ENCODE measurements at regions of chr14 and their contacts with region 1.

Region 1: DNA sequence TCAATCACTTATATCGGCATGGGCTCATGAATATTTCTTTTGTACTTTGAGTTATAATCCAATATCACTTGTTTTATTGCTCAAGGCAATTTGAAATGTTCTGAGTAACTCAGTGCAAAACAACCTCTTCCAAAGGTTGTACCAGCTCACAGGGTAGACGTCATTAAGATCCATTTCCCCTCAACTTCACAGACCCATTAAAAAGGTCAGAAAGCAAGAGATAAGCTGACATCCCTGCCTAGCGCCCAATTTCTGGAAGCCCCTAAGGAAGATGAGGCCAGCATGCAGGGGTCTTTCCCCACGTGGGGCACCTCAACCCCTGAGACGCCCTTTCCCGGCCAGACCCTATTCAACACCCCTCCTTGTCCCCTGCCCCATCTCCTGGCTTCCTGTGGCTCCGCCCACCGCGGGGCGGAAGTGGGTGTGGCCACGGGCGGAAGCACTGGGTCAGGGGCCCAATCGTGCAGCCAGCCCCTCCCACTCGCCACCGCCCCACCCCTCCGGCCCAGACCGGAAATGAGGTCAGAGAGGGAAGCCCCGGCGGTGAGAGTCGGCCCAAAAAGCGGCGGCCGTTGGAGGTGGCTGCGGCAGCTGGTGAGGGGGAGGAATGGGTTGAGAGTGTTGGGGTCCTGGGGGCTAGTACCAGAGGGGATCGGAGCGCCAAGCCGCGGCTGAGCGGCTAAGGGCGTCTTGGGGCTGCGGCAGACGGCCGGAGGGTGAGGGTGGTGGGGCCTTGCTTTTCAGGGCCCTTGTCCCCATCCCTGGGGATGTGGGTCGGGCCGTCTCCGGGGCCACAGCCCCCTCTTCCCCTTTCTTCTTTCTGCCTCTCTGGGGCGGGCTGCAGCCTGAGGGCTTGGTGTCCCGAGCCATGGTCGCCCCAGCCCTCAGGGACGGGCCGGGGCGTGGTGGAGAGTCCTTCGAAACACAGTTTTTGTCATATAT is at the start of gene GPATCH2L:
- DNase-seq: peak; percentile 89 to 95
- ATAC-seq: peak; percentile 90 to 95
- H3K4me3 ChIP-seq: peak within 1 kb of the TSS; percentile 81 to 99 (median 92)
- H3K27ac ChIP-seq: peak within 1 kb of the TSS; percentile 83 to 95 (median 94)
- H3K4me1 ChIP-seq: peaks cover 42 to 44% of the 10 kb centered on the region in 2 donors
- H3K27me3 ChIP-seq: no peaks in the 10 kb centered on the region
- CTCF ChIP-seq: no peak
- POLR2A ChIP-seq: peak; percentile 93
- total RNA-seq, gene GPATCH2L: 24.6 to 63.5 (median 41.9) TPM

Region 2: GRCh38 chr14:76191297-76191696 is 39.6 kb after region 1 on chr14:
- in situ Hi-C with region 1: no loop called
- intact Hi-C with region 1: no loop called
- DNase-seq: peak; percentile 12 to 26
- ATAC-seq: no peak
- H3K4me3 ChIP-seq: no peak overlapping the region
- H3K27ac ChIP-seq: no peak overlapping the region
- H3K4me1 ChIP-seq: peaks cover 0 to 2% of the 10 kb centered on the region in 2 donors
- H3K27me3 ChIP-seq: no peaks in the 10 kb centered on the region
- CTCF ChIP-seq: no peak
- POLR2A ChIP-seq: no peak

Region 3: DNA sequence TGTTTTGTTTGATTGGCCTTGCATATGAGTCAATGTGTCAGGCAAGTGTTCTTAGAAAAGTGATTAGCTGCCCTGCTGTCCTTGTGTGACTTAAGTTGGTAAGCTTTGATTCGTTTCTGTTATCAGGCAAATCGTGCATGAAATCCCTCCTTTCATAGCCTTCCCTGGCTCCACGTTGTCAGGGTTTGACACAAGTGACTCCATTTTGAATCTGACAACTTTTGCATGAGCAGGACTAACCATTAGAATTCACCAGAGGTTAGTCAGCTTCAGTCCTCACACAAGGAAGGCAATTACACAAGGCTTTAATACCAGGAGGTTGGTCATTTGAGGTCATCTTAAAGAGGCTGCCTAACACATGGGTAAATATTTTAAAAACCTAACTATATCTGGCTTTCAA is 68.2 kb after region 1 on chr14:
- in situ Hi-C with region 1: no loop called
- intact Hi-C with region 1: no loop called
- DNase-seq: no peak
- ATAC-seq: no peak
- H3K4me3 ChIP-seq: no peak overlapping the region
- H3K27ac ChIP-seq: no peak overlapping the region
- H3K4me1 ChIP-seq: no peaks in the 10 kb centered on the region
- H3K27me3 ChIP-seq: no peaks in the 10 kb centered on the region
- CTCF ChIP-seq: no peak
- POLR2A ChIP-seq: no peak

Region 4: DNA sequence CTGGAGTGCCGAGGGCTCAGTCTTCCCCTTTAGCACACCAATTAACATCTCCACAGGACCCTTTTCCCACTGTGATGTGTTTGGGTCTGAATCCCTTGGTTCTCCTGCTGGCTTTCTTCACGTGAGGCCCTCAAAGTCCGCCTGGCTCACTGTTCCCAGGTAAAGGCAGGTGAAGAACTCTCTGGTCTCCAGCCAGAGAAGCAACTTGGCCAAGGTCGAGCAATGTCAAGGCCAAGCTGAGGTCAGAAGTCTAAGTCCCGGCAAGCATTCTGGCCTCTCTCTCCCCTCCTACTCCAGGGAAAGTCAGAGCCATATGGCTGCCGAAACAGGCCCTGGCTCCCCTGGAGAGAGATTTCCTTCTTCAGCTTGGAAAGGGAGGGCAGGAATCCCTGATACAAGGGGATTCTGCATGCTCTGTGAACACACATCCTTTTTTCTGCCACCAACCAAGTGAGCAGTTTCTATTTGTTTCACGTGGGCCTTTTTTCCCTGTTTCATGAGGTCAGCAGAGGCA is 162.9 kb after region 1 on chr14:
- in situ Hi-C with region 1: no loop called
- intact Hi-C with region 1: loop called (anchors 5 kb)
- DNase-seq: no peak
- ATAC-seq: no peak
- H3K4me3 ChIP-seq: no peak overlapping the region
- H3K27ac ChIP-seq: peak overlapping the region in 2 of 4 donors; percentile 15 to 36
- H3K4me1 ChIP-seq: peaks cover 18 to 24% of the 10 kb centered on the region in 2 donors
- H3K27me3 ChIP-seq: no peaks in the 10 kb centered on the region
- CTCF ChIP-seq: no peak
- POLR2A ChIP-seq: no peak

Region 5: GRCh38 chr14:76473481-76474263 is 322.0 kb after region 1 on chr14:
- in situ Hi-C with region 1: no loop called
- intact Hi-C with region 1: loop called (anchors 2 kb)
- DNase-seq: peak; percentile 51 to 84
- ATAC-seq: peak; percentile 93 to 94
- H3K4me3 ChIP-seq: peak overlapping the region; percentile 30 to 45 (median 38)
- H3K27ac ChIP-seq: peak overlapping the region; percentile 64 to 80 (median 77)
- H3K4me1 ChIP-seq: peaks cover 36 to 43% of the 10 kb centered on the region in 2 donors
- H3K27me3 ChIP-seq: no peaks in the 10 kb centered on the region
- CTCF ChIP-seq: peak in 1 of 5 experiments; percentile 11
- POLR2A ChIP-seq: no peak

Measured in gastrocnemius medialis (tissue), 4 donors.